SK-N-SH (cell line): ENCODE measurements at regions of chr2 and their contacts with region 1.

Region 1: GRCh38 chr2:42404676-42405075 is 43.7 kb upstream of the COX7A2L start:
- DNase-seq: no peak
- H3K4me3 ChIP-seq: no peak overlapping the region
- H3K27ac ChIP-seq: no peak overlapping the region
- H3K4me1 ChIP-seq: no peaks in the 10 kb centered on the region
- H3K27me3 ChIP-seq: peaks cover 6% of the 10 kb centered on the region; the same call in 1 of the 2 replicates
- CTCF ChIP-seq: no peak
- EP300 ChIP-seq: no peak
- RAD21 ChIP-seq: no peak

Region 2: DNA sequence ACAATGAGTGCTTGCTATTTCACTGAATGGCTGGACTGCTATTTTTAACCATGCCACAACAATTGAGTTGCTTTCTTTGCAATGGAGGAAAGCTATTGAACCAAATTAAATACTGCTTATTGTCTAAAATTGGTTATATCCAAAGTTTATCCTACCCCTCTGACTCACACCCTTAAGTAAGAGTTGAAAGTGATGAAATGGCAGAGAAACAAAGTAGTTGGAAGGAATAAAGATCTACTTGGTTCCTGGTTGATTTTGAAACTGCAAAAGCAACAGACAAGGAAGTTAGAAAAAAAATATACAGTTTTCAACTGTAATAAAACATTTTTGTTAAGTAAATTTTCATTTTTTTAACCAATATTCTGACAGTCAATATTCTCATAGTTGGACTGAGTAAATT is 188.0 kb before region 1 on chr2:
- CTCF ChIA-PET with region 1: no interaction called
- POLR2A ChIA-PET with region 1: no interaction called
- DNase-seq: no peak
- H3K4me3 ChIP-seq: no peak overlapping the region
- H3K27ac ChIP-seq: no peak overlapping the region
- H3K4me1 ChIP-seq: no peaks in the 10 kb centered on the region; a peak in 1 of 4 replicates
- H3K27me3 ChIP-seq: no peaks in the 10 kb centered on the region
- CTCF ChIP-seq: no peak
- EP300 ChIP-seq: no peak
- RAD21 ChIP-seq: no peak

Region 3: DNA sequence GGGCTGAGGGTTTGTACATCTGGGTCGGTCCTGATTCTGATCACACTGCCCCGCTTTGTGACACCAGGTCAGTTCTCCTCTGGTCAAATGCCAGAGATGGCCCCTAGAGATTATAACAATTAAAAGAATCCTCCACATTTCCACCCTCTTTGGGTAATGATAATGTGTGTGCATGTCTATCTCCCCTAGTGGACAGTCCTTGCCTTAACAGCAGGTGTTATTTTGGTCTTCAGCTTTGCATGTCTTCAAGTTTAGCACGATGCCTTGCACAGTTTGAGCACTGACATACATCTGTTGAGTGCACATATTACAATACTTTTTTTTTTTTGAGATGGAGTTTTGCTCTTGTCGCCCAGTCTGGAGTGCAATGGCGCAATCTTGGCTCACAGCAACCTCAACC is 18.0 kb before region 1 on chr2:
- CTCF ChIA-PET with region 1: interaction called, 20 read pairs
- POLR2A ChIA-PET with region 1: no interaction called
- DNase-seq: peak; percentile 43
- H3K4me3 ChIP-seq: no peak overlapping the region
- H3K27ac ChIP-seq: no peak overlapping the region
- H3K4me1 ChIP-seq: peaks cover 0 to 8% of the 10 kb centered on the region in 2 experiments; a peak in 2 of 4 replicates
- H3K27me3 ChIP-seq: no peaks in the 10 kb centered on the region; the same call in 1 of the 2 replicates
- CTCF ChIP-seq: peak; percentile 57
- EP300 ChIP-seq: no peak
- RAD21 ChIP-seq: no peak

Region 4: DNA sequence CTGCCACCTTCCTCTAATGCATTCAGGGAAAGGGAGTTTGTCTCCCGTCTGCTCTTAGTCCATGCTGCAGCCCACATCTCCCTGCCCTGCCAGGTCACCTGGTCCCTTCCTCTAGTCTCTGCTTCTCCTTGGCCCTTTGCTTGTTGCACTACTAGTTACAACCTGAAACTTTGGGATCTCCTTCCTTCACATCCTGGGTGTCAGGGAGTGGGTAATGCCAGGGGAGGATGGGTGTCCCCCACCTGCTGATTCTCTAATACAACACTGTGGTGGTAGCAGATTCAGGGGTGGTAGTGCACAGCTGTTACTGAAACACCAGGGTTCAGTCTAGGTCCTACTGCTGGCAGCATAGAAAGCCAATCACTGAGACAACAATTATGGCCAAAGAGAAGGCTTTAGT is 12.5 kb before region 1 on chr2:
- CTCF ChIA-PET with region 1: interaction called, 20 read pairs
- POLR2A ChIA-PET with region 1: no interaction called
- DNase-seq: no peak
- H3K4me3 ChIP-seq: no peak overlapping the region
- H3K27ac ChIP-seq: no peak overlapping the region
- H3K4me1 ChIP-seq: no peaks in the 10 kb centered on the region; a peak in 2 of 4 replicates
- H3K27me3 ChIP-seq: no peaks in the 10 kb centered on the region; the same call in 1 of the 2 replicates
- CTCF ChIP-seq: no peak
- EP300 ChIP-seq: no peak
- RAD21 ChIP-seq: no peak